Heart right ventricle (tissue), 16 donors: ENCODE measurements at regions of chr7 and their contacts with region 1.

Region 1: GRCh38 chr7:25543798-25544197 is 315.5 kb upstream of the NPVF start:
- DNase-seq: no peak
- ATAC-seq: no peak
- H3K4me3 ChIP-seq: no peak overlapping the region
- H3K27ac ChIP-seq: no peak overlapping the region
- H3K4me1 ChIP-seq: no peaks in the 10 kb centered on the region
- H3K27me3 ChIP-seq: peaks cover 0 to 10% (median 0%) of the 10 kb centered on the region in 7 donors
- CTCF ChIP-seq: no peak

Region 2: GRCh38 chr7:25527665-25528170 is 16.1 kb before region 1 on chr7:
- intact Hi-C with region 1: loop called in 1 of 10 experiments (anchors 1 kb)
- DNase-seq: no peak
- ATAC-seq: no peak
- H3K4me3 ChIP-seq: no peak overlapping the region
- H3K27ac ChIP-seq: no peak overlapping the region
- H3K4me1 ChIP-seq: no peaks in the 10 kb centered on the region
- H3K27me3 ChIP-seq: peaks cover 0 to 5% (median 0%) of the 10 kb centered on the region in 7 donors
- CTCF ChIP-seq: no peak

Region 3: DNA sequence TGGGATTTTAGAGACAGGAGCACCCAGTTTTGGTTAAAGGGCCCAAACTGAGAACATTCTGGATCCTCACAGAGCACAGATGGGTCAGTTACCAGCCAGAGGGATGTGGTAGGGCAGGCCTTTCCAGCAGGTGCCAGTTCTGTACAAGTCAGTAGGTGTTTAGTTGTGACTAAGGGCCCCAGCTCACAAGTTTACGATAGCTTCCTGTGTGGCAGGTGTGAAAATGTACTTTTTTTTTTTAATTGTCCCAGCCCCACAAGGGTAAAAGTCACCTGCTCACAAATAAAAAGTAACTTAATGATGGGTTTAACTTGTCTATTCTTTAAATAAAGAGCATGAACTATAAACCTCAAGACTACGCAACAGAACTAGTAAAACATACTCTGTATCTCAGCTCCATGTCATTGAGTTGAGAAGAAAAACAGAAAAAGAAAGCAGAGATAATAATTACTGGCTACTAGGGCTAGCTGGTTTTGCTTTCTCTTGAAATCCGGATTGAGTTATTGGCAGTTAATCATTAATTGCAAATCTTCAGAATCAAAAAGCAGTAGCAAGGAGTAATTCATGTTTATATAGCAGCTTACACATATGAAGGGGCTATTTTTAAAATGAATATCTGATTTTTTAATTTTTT is 623.6 kb after region 1 on chr7:
- intact Hi-C with region 1: no loop called
- DNase-seq: no peak
- ATAC-seq: no peak
- H3K4me3 ChIP-seq: no peak overlapping the region
- H3K27ac ChIP-seq: no peak overlapping the region
- H3K4me1 ChIP-seq: peaks cover 0 to 5% (median 0%) of the 10 kb centered on the region in 9 donors
- H3K27me3 ChIP-seq: no peaks in the 10 kb centered on the region
- CTCF ChIP-seq: no peak